ENCODE measurements at regions of chr5 and their contacts with region 1.

Region 1: GRCh38 chr5:160399402-160400353 is at the start of gene FAM200C:
- DNase-seq: peak; percentile 90
- H3K4me3 ChIP-seq: peak within 1 kb of the TSS; percentile 73
- H3K27ac ChIP-seq: peak within 1 kb of the TSS; percentile 92
- H3K27me3 ChIP-seq: no peaks in the 10 kb centered on the region
- CTCF ChIP-seq: no peak
- polyA plus RNA-seq, gene FAM200C: 3.6 and 5.3 TPM in 2 replicates

Region 2: GRCh38 chr5:159340511-159340910 is 1059.2 kb before region 1 on chr5:
- CTCF ChIA-PET with region 1: no interaction called
- POLR2A ChIA-PET with region 1: no interaction called
- DNase-seq: no peak
- H3K4me3 ChIP-seq: no peak overlapping the region
- H3K27ac ChIP-seq: no peak overlapping the region
- H3K27me3 ChIP-seq: no peaks in the 10 kb centered on the region
- CTCF ChIP-seq: no peak

Region 3: DNA sequence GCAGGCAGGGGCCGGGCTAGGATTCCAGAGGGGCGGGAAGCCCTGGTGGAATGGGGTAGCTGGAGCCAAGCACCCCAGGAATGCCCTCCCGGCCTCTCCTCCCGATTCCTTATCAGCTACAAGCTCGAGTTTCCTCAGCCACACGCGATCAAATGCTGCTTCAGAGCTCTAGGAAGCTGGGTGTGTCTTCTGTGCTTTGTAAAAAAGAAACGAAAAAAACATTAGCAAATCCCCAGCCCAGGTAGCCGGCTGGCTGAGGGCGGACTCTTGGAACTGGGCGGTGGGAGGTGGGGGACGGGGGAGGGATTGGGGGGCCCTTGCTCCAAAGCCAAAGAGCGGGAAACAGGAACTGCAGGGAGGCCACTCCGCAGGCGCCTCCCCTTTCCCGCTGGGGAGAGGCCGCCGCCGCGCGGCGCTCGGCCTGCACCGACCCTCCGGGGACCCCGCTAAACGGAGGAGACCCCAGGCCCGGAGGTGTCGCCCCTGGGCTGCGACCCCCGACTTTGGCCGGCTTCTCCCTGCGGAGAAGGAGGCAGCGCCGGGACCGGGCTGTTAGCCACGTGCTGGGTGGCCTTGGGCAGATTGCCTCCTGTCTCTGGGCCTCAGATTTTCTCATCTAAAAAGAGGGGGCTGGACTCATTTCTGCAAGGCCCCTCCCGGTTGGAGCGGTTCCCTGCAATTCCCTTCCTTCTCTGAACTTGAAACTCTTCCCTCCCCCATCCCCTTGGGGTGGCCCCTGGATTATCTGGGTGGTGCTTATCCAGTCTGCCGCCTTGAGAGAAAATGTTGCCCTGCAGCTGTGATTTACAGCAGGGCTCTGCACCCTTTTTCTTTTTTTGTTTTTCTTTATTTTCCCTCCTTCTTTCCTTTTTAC is 211.3 kb before region 1 on chr5:
- CTCF ChIA-PET with region 1: no interaction called
- POLR2A ChIA-PET with region 1: no interaction called
- DNase-seq: no peak
- H3K4me3 ChIP-seq: peak overlapping the region; percentile 47
- H3K27ac ChIP-seq: peak overlapping the region; percentile 31
- H3K27me3 ChIP-seq: no peaks in the 10 kb centered on the region
- CTCF ChIP-seq: no peak

Region 4: GRCh38 chr5:161261668-161262323 is 862.1 kb after region 1 on chr5:
- CTCF ChIA-PET with region 1: no interaction called
- POLR2A ChIA-PET with region 1: interaction called, 10 read pairs
- DNase-seq: no peak
- H3K4me3 ChIP-seq: no peak overlapping the region
- H3K27ac ChIP-seq: no peak overlapping the region
- H3K27me3 ChIP-seq: no peaks in the 10 kb centered on the region
- CTCF ChIP-seq: no peak

Region 5: DNA sequence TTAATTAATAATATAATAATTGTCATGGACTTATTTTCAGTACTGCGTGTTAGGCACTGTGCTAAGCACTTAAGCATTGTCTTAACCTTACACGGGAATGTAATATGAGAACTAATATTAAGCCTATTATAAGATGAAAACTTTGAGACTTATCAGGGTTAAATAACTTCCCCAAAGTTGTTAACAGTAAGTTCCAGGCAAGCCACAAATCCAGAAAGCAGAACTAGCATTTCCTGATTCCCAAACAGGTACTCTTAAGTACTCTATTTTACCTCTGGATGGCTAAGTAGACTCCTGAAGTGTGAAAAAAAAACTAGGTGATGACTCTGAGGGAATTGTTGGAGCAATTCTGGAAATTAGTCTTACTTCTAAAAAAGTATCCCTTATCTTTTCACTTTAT is 1691.7 kb after region 1 on chr5:
- CTCF ChIA-PET with region 1: no interaction called
- POLR2A ChIA-PET with region 1: no interaction called
- DNase-seq: no peak
- H3K4me3 ChIP-seq: no peak overlapping the region
- H3K27ac ChIP-seq: no peak overlapping the region
- H3K27me3 ChIP-seq: no peaks in the 10 kb centered on the region
- CTCF ChIP-seq: no peak

Measured in AG04450 (cell line).